ENCODE measurements at regions of chr16 and their contacts with region 1.

Region 1: GRCh38 chr16:19555162-19555937 is at the start of gene VPS35L:
- DNase-seq: peak; percentile 98
- H3K4me3 Mint-ChIP-seq: peak within 1 kb of the TSS; percentile 92
- H3K27ac Mint-ChIP-seq: peak within 1 kb of the TSS; percentile 90
- H3K4me1 Mint-ChIP-seq: peaks cover 26% of the 10 kb centered on the region
- H3K27me3 Mint-ChIP-seq: no peaks in the 10 kb centered on the region

Region 2: GRCh38 chr16:19523648-19524355 is 31.5 kb before region 1 on chr16 and contains the start of gene CCP110:
- CTCF ChIA-PET with region 1: interaction called, 12 read pairs
- DNase-seq: peak; percentile 98
- H3K4me3 Mint-ChIP-seq: peak within 1 kb of the TSS; percentile 87
- H3K27ac Mint-ChIP-seq: peak within 1 kb of the TSS; percentile 85
- H3K4me1 Mint-ChIP-seq: peaks cover 50% of the 10 kb centered on the region
- H3K27me3 Mint-ChIP-seq: no peaks in the 10 kb centered on the region

Region 3: GRCh38 chr16:19737306-19738038 is 182.1 kb after region 1 on chr16:
- CTCF ChIA-PET with region 1: no interaction called
- DNase-seq: no peak
- H3K4me3 Mint-ChIP-seq: no peak overlapping the region
- H3K27ac Mint-ChIP-seq: no peak overlapping the region
- H3K4me1 Mint-ChIP-seq: no peaks in the 10 kb centered on the region
- H3K27me3 Mint-ChIP-seq: no peaks in the 10 kb centered on the region

Region 4: DNA sequence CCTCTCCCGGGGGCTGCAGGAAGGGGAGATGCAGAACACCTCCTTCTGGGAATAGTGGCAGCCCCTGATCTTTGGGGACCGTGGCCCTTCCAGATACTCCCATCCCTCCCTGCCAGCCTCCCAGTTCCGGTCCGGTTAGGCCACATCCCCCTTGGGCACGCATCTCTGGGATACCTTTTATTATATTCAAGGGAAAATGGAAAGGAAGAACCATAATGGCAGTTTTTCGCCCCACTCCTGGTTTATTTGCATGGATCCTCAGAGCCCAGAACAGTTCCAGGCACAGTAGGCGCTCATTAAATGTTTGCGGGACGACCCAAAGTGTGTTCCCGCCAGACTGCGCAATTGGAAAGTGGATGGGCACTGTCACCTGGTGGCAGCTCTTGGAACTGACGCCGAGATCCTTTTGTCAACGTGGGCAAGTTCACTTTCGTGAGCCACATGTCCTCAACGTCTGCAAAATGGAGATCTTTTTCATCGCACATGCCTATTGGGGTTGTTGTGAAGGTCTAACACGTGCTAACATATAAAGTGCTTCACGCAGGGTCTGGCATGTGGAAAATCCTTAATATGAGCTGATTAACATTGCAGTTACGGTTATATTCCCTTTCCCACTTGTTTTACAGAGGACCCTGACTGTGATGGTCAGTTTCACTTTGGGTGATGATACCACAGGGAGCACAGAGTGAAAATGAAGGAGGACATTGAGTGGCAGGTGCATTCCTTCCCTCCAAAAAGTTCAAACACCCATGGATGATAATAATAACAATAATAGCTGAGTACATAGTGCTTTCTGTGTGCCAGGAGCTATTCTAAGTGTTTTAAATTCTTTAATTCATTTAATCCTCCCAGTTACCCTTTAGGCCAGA is 331.0 kb after region 1 on chr16:
- CTCF ChIA-PET with region 1: interaction called, 14 read pairs
- DNase-seq: peak; percentile 88
- H3K4me3 Mint-ChIP-seq: peak overlapping the region; percentile 73
- H3K27ac Mint-ChIP-seq: no peak overlapping the region
- H3K4me1 Mint-ChIP-seq: peaks cover 24% of the 10 kb centered on the region
- H3K27me3 Mint-ChIP-seq: peaks cover 53% of the 10 kb centered on the region

Measured in activated naive CD4-positive, alpha-beta T cell treated with anti-CD3 and anti-CD28 coated beads, Interleukin-2, amount 10 ng/mL, durations not matched to agents 7 days and 5 days (primary cell).